ENCODE measurements at regions of chr20 and their contacts with region 1.

Region 1: GRCh38 chr20:38210741-38211140 is 45.7 kb upstream of the TGM2 start:
- DNase-seq: peak; percentile 22
- ATAC-seq: peak in 1 of 2 donors; percentile 18

Region 2: GRCh38 chr20:38094373-38094891 is 116.3 kb before region 1 on chr20:
- intact Hi-C with region 1: no loop called
- DNase-seq: peak; percentile 62
- ATAC-seq: peak in 1 of 2 donors; percentile 51

Region 3: DNA sequence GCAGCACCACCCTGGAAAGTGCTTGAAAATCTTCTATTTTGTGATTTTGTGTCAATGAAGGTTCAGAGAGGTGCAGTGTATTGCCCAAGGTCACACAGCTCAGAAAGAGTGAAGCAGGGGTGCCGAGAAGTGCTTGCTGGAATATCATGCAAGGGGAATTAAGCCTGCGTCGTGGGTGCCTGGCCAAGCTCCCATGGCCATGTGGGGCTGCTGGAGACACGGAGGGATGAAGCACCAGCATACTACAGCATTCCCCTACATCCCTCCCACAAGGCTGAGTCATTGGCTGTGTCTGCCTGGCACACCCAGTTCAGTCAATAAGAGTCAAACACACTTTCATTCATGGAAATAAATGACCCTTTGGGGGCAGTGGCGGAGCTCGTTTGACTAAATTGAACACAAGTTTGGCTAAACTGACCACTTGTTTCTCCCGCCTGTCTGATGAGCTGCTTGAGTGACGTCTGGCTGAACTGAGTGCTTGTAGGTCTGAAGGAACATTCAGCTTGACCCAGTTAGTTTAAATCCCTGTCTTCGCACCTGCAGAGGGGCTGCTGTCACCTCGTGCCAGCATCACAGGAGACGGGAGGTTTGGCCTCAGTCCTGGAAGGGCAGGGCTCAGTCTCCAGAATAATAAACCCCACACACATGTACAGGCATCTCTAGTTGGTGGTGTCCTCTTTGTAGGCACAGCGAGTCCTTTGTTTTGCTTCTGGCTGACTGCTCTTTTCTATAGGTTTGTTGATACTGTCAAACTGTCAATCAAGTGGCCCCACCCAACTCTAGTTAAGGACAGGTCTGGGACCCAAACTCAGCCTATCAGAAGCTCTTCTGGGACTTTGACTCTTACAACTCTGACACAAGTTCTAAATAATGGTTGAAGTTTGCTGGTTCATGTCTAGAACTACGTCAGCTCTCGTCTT is 37.2 kb before region 1 on chr20:
- intact Hi-C with region 1: loop called in 1 of 2 experiments (anchors 5 kb)
- DNase-seq: peak; percentile 86
- ATAC-seq: peak; percentile 53 to 87